OCI-LY7 (cell line): ENCODE measurements at regions of chr1 and their contacts with region 1.

Region 1: GRCh38 chr1:79543394-79543793 is 536.9 kb upstream of the ADGRL4 start:
- DNase-seq: no peak
- H3K4me3 ChIP-seq: no peak overlapping the region
- H3K27ac ChIP-seq: no peak overlapping the region
- H3K4me1 ChIP-seq: peaks cover 20% of the 10 kb centered on the region
- CTCF ChIP-seq: no peak

Region 2: GRCh38 chr1:79532555-79532954 is 10.8 kb before region 1 on chr1:
- CTCF ChIA-PET with region 1: no interaction called
- POLR2A ChIA-PET with region 1: interaction called, 34 read pairs
- intact Hi-C with region 1: no loop called
- DNase-seq: peak; percentile 44
- H3K4me3 ChIP-seq: no peak overlapping the region
- H3K27ac ChIP-seq: peak overlapping the region; percentile 33
- H3K4me1 ChIP-seq: peaks cover 18% of the 10 kb centered on the region
- CTCF ChIP-seq: no peak